Aorta (tissue), 5 donors: ENCODE measurements at regions of chr5 and their contacts with region 1.

Region 1: GRCh38 chr5:141564216-141564692 is 54.5 kb downstream of the DIAPH1 start:
- DNase-seq: peak in 1 of 2 donors; percentile 55
- ATAC-seq: peak; percentile 89
- H3K4me3 ChIP-seq: no peak overlapping the region
- H3K27ac ChIP-seq: peak overlapping the region in 1 of 2 donors; percentile 48
- H3K4me1 ChIP-seq: peaks cover 1 to 2% of the 10 kb centered on the region in 2 donors
- H3K27me3 ChIP-seq: no peaks in the 10 kb centered on the region

Region 2: GRCh38 chr5:141172378-141173204 is 391.7 kb before region 1 on chr5 and contains the start of gene PCDHB7:
- intact Hi-C with region 1: loop called (anchors 5 to 10 kb)
- DNase-seq: peak in 1 of 2 donors; percentile 44
- ATAC-seq: no peak
- H3K4me3 ChIP-seq: peak within 1 kb of the TSS in 1 of 2 donors; percentile 18
- H3K27ac ChIP-seq: no peak within 1 kb of the TSS
- H3K4me1 ChIP-seq: no peaks in the 10 kb centered on the region
- H3K27me3 ChIP-seq: no peaks in the 10 kb centered on the region
- total RNA-seq, gene PCDHB7: 5.0 to 6.7 TPM

Region 3: DNA sequence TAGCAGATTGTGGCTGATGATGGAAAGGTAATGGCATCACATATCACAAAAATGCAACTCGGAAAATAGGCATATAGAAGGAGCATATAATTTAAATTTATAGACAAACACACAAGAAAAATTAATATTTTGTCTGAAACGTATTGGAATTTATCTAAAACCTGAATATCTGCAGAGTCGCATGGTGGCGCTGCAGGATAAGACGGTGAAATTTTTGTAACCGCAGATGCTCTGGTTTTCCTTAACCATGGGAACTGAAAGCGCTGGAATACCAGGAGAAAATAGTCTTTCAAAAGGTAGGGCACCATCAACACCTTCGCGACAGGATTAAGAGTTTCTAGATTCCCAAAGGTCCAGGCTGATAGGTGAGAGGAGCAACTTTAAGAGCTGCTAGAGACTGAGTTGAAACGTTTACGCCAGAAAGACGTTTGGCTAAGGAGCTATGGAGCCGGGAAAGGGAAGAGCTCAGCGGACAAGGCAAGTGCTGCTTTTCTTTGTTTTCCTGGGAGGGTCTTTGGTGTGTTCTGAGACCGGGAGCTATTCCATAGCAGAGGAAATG is 330.1 kb before region 1 on chr5:
- intact Hi-C with region 1: loop called in 1 of 2 experiments (anchors 10 kb)
- DNase-seq: no peak
- ATAC-seq: no peak
- H3K4me3 ChIP-seq: peak overlapping the region in 1 of 2 donors; percentile 30
- H3K27ac ChIP-seq: no peak overlapping the region
- H3K4me1 ChIP-seq: no peaks in the 10 kb centered on the region
- H3K27me3 ChIP-seq: peaks cover 0 to 1% of the 10 kb centered on the region in 2 donors

Region 4: DNA sequence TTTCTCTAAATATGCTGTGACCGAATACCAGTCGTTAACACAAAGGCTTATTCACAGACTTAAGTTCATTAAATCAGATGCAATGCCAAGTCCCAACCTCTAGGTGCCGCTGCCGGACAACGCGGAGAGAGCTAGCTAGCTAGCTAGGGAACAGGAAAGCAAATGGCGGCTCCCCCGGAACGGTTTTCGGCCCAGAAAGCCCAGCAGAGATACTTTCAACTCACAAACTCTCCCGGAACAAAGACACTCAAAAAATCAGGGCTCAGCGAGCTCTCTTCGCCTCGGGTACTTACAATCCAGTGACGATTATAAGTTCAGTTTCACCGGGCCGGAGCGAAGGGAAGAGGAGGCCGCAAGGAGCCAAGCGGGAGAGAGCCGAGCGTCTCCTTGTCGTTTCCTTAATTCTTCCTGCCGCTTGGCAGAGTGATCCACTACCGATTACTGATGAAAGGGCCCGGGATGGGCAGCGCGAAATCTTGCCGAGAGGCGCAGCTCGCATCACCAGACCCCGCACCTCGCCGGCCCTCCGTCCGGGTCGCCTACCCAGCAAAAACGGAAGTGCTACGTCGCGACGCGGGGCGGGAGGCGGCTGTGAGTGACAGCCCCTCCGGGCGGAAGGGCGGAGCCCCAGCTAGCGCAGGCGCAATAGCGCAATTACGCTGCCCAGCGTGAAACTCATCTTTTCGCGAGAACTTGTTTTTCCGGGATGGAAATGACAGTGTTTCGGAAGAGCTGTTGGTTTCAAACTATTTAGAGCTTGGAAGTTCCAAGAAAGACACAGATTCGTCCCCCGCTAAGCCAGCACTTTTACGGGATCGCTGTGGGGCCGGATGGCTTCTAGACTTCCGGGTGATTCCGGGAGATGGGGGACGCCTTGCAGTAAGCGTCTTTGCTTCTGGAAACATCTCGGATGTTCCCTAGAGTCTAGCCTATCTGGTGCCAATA is 243.8 kb before region 1 on chr5 and contains the start of gene TAF7:
- intact Hi-C with region 1: loop called (anchors 2 to 5 kb)
- DNase-seq: peak; percentile 94 to 97
- ATAC-seq: peak; percentile 99
- H3K4me3 ChIP-seq: peak within 1 kb of the TSS; percentile 66 to 87
- H3K27ac ChIP-seq: peak within 1 kb of the TSS; percentile 20 to 78
- H3K4me1 ChIP-seq: peaks cover 0 to 2% of the 10 kb centered on the region in 2 donors
- H3K27me3 ChIP-seq: no peaks in the 10 kb centered on the region
- total RNA-seq, gene TAF7: 59.8 to 79.1 TPM

Region 5: DNA sequence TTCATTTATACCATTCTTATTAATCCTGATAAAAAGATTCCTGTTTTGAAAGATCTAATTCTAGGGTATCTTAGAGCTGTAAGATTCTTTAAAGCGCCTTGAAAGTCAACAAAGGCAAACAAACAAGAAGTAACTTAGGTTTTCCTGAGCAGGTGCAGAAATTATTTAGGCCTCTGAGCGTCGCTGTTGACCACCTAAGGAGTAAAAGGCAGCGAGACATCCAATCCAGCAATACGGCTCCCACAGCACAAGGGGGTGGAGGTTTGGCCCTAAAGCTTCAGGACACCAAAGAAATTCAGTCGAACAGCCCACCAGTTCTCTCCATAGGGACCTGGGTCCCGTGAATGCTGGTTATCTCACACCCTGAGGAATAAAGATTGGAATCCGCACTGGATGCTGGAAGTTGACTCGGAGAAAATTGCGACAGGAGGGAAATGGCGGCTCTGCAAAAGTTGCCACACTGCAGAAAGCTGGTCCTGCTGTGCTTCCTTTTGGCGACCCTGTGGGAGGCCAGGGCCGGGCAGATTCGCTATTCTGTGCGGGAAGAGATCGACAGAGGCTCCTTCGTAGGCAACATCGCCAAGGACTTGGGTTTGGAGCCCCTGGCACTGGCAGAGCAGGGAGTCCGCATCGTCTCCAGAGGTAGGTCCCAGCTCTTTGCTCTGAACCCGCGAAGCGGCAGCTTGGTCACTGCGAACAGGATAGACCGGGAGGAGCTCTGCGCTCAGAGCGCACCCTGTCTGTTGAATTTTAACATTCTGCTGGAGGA is 225.5 kb before region 1 on chr5 and contains the start of gene PCDHGA2:
- intact Hi-C with region 1: loop called in 1 of 2 experiments (anchors 5 kb)
- DNase-seq: no peak
- ATAC-seq: peak; percentile 68
- H3K4me3 ChIP-seq: no peak within 1 kb of the TSS
- H3K27ac ChIP-seq: no peak within 1 kb of the TSS
- H3K4me1 ChIP-seq: no peaks in the 10 kb centered on the region
- H3K27me3 ChIP-seq: peaks cover 0 to 1% of the 10 kb centered on the region in 2 donors
- total RNA-seq, gene PCDHGA2: 6.2 to 10.6 TPM

Region 6: GRCh38 chr5:141412854-141413539 is 151.3 kb before region 1 on chr5 and contains the start of gene PCDHGA10:
- intact Hi-C with region 1: loop called (anchors 5 to 10 kb)
- DNase-seq: peak in 1 of 2 donors; percentile 61
- ATAC-seq: no peak
- H3K4me3 ChIP-seq: no peak within 1 kb of the TSS
- H3K27ac ChIP-seq: no peak within 1 kb of the TSS
- H3K4me1 ChIP-seq: no peaks in the 10 kb centered on the region
- H3K27me3 ChIP-seq: no peaks in the 10 kb centered on the region
- total RNA-seq, gene PCDHGA10: 6.1 to 11.4 TPM

Region 7: DNA sequence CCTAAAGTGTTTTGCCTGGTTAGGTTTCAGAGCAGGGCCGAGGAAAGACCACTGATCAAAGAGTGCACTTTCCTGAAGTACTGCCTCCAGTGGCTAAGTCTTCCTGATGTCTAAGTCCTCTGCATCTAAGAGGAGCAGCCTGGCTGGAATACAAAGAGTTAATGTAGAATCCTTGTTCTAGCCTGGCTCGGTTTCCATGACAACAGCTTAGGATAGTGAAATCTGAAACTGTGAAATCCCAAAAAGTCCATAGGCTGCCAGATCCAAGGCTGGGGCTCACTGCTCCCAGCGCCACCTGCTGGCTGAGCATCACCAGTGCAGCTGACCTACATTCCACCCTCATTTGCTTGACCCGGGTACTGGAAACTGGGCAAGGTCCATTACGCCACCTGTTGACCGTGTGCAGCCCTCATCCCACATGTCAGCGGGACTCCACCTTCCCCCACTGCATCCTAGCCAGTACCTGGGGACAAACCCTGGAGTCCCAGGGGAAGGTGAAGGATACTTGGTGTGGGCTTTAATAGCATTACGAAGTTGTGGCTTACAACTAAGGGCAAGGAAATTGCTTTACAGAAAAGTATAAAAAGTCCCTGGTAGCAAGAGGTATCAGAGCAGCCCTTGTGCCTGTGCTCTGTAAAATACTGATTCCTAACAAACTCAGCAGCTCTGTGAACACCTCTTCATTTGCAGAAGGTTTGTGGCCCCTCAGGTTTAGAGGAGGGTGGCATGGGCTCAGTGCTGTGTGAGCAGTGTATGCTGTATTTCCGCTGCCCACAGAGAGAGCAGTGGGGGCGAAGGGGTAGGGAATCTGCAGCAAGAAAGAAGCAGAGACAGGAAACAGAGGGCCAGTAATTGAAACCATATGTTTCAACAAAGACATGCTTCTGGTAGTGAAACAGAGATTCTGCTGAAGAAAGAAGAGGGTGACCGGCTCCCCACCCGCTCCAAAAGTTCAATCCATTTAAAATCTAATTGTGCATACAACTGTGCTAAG is 39.4 kb before region 1 on chr5:
- intact Hi-C with region 1: loop called (anchors 2 to 5 kb)
- DNase-seq: peak; percentile 86 to 93
- ATAC-seq: peak; percentile 95
- H3K4me3 ChIP-seq: no peak overlapping the region
- H3K27ac ChIP-seq: peak overlapping the region; percentile 29 to 63
- H3K4me1 ChIP-seq: no peaks in the 10 kb centered on the region
- H3K27me3 ChIP-seq: no peaks in the 10 kb centered on the region